Aorta (tissue), 5 donors: ENCODE measurements at regions of chr5 and their contacts with region 1.

Region 1: DNA sequence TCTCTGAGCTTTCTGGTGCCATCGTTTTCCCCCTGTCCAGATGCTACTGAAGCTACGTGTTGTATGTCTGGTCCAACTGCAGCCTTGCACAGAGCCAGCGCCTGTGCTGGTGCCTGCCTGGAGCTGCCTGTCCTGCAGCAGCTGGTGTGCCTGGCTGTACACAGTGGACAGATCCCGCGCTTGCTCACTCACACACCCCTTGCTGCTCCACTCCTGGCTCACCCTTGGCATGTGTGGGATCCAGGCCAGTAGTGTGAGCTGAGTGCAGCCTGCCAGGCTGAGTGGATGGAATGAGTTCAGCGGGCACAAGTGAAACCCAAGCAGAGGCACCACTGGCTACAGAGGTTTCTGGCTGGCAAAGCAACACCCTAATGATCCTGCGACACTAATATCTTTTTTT is 40.4 kb downstream of the FER start:
- DNase-seq: peak; percentile 79 to 89
- ATAC-seq: peak; percentile 89
- H3K4me3 ChIP-seq: no peak overlapping the region
- H3K27ac ChIP-seq: no peak overlapping the region
- H3K4me1 ChIP-seq: peaks cover 0 to 2% of the 10 kb centered on the region in 2 donors
- H3K27me3 ChIP-seq: no peaks in the 10 kb centered on the region

Region 2: GRCh38 chr5:108836492-108836891 is 48.4 kb after region 1 on chr5:
- intact Hi-C with region 1: loop called in 1 of 2 experiments (anchors 2 kb)
- DNase-seq: no peak
- ATAC-seq: no peak
- H3K4me3 ChIP-seq: no peak overlapping the region
- H3K27ac ChIP-seq: no peak overlapping the region
- H3K4me1 ChIP-seq: no peaks in the 10 kb centered on the region
- H3K27me3 ChIP-seq: no peaks in the 10 kb centered on the region